Mammary epithelial cell (primary cell): ENCODE measurements at regions of chr3 and their contacts with region 1.

Region 1: GRCh38 chr3:121545574-121546455 is at the start of gene POLQ:
- DNase-seq: peak; percentile 93
- H3K4me3 ChIP-seq: peak within 1 kb of the TSS; percentile 69 to 86 (median 71)
- H3K27ac ChIP-seq: peak within 1 kb of the TSS; percentile 66
- H3K4me1 ChIP-seq: peaks cover 16% of the 10 kb centered on the region
- H3K27me3 ChIP-seq: no peaks in the 10 kb centered on the region
- CTCF ChIP-seq: no peak
- total RNA-seq, gene POLQ: 1.0 to 8.4 TPM

Region 2: DNA sequence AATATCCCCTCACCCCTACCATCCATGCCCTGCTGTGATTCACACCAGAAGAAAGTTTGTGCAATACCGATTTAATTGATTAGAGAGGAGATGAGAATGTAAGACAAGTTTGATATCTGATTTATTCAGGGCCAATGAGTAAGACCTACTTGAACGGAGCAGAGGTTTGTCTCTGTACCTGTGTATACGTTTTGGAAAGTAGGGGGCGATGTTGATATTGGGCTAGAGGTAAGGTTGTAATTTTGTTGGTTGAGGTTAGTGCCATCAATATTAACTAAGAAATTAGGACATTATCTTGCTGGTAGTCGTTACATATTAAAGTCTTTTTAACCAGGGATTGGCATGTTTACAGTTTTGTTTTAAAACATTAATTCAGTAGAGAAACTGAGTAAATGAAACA is 309.7 kb after region 1 on chr3:
- CTCF ChIA-PET with region 1: no interaction called
- dilution Hi-C with region 1: no loop called
- in situ Hi-C with region 1: no loop called
- intact Hi-C with region 1: loop called (anchors 1 kb)
- DNase-seq: peak; percentile 31
- H3K4me3 ChIP-seq: no peak overlapping the region
- H3K27ac ChIP-seq: no peak overlapping the region
- H3K4me1 ChIP-seq: peaks cover 8% of the 10 kb centered on the region
- H3K27me3 ChIP-seq: no peaks in the 10 kb centered on the region
- CTCF ChIP-seq: peak; percentile 44 to 65

Region 3: GRCh38 chr3:121995161-121996137 is 449.6 kb after region 1 on chr3:
- CTCF ChIA-PET with region 1: no interaction called
- dilution Hi-C with region 1: no loop called
- in situ Hi-C with region 1: no loop called
- intact Hi-C with region 1: loop called (anchors 5 kb)
- DNase-seq: peak; percentile 93
- H3K4me3 ChIP-seq: no peak overlapping the region
- H3K27ac ChIP-seq: peak overlapping the region; percentile 55
- H3K4me1 ChIP-seq: peaks cover 27% of the 10 kb centered on the region
- H3K27me3 ChIP-seq: no peaks in the 10 kb centered on the region
- CTCF ChIP-seq: peak; percentile 69 to 73

Region 4: DNA sequence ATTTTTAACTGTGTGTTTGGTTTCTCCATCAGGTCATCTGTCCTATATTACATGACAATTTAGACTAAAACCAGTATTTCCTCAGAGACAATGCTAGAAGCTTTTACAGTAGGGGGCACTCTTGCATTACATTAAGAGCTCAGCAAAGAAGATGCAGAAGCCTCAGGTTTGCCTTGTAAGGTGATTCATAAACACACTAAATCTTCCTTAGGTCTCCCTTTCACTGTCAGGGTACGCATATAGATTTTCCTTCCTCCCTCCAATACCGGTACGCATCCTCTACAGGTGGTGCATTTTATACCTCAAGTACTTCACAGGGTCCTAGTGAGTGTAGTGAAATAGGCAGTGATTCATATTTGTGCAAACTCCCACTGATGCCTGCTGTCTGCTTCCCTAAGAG is 555.8 kb after region 1 on chr3:
- CTCF ChIA-PET with region 1: no interaction called
- dilution Hi-C with region 1: no loop called
- in situ Hi-C with region 1: no loop called
- intact Hi-C with region 1: loop called (anchors 2 kb)
- DNase-seq: peak; percentile 66
- H3K4me3 ChIP-seq: no peak overlapping the region
- H3K27ac ChIP-seq: no peak overlapping the region
- H3K4me1 ChIP-seq: no peaks in the 10 kb centered on the region
- H3K27me3 ChIP-seq: no peaks in the 10 kb centered on the region
- CTCF ChIP-seq: peak; percentile 73 to 76

Region 5: GRCh38 chr3:122299872-122300460 is 754.2 kb after region 1 on chr3:
- CTCF ChIA-PET with region 1: interaction called, 4 read pairs
- dilution Hi-C with region 1: no loop called
- in situ Hi-C with region 1: no loop called
- intact Hi-C with region 1: loop called (anchors 1 kb)
- DNase-seq: no peak
- H3K4me3 ChIP-seq: no peak overlapping the region
- H3K27ac ChIP-seq: no peak overlapping the region
- H3K4me1 ChIP-seq: no peaks in the 10 kb centered on the region
- H3K27me3 ChIP-seq: no peaks in the 10 kb centered on the region
- CTCF ChIP-seq: peak; percentile 67 to 70

Region 6: GRCh38 chr3:122356415-122356814 is 810.6 kb after region 1 on chr3:
- CTCF ChIA-PET with region 1: no interaction called
- dilution Hi-C with region 1: no loop called
- in situ Hi-C with region 1: no loop called
- intact Hi-C with region 1: loop called (anchors 5 kb)
- DNase-seq: peak; percentile 72
- H3K4me3 ChIP-seq: no peak overlapping the region
- H3K27ac ChIP-seq: no peak overlapping the region
- H3K4me1 ChIP-seq: peaks cover 21% of the 10 kb centered on the region
- H3K27me3 ChIP-seq: no peaks in the 10 kb centered on the region
- CTCF ChIP-seq: peak; percentile 68 to 84

Region 7: GRCh38 chr3:123489400-123490004 is 1943.7 kb after region 1 on chr3:
- CTCF ChIA-PET with region 1: no interaction called
- dilution Hi-C with region 1: no loop called
- in situ Hi-C with region 1: no loop called
- intact Hi-C with region 1: loop called (anchors 5 kb)
- DNase-seq: peak; percentile 23
- H3K4me3 ChIP-seq: no peak overlapping the region
- H3K27ac ChIP-seq: no peak overlapping the region
- H3K4me1 ChIP-seq: no peaks in the 10 kb centered on the region
- H3K27me3 ChIP-seq: no peaks in the 10 kb centered on the region
- CTCF ChIP-seq: peak; percentile 75 to 93